ENCODE measurements at regions of chr1 and their contacts with region 1.

Region 1: DNA sequence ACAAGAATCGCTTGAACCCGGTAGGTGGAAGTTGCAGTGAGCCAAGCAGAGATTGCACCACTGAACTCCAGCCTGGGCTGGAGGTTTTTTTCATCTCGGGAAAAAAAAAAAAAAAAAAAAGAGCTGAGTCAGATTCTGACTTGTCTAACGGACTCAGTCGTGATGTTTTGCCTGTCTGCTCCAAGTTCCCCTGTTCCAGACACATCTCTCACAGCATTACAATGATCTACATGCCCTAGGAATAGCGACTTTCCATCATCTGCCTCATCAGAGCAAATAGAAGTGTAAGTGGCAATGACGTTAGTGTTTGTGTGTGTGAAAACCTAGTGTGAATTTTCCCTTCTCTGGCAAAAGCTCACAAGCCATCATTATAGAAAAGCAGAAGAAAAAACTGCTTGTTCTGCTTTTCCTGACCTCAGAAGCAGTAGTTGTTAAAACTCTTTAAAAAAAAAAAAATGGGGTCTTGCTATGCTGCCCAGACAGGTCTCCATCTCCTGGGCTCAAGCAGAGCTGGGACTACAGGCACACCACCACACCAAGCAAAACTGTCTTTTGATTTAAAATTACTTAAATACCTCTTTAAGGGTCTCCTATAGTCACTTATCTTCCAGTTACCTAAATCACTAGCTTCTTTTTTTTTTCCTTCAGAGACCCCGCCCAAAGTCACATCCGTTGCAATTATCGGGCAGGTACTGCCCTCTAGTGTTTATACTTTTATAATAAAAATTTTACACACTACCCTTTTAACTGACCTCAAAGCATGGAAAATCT is 37.3 kb downstream of the PLEKHO1 start:
- DNase-seq: no peak
- H3K4me3 ChIP-seq: no peak overlapping the region
- CTCF ChIP-seq: no peak

Region 2: DNA sequence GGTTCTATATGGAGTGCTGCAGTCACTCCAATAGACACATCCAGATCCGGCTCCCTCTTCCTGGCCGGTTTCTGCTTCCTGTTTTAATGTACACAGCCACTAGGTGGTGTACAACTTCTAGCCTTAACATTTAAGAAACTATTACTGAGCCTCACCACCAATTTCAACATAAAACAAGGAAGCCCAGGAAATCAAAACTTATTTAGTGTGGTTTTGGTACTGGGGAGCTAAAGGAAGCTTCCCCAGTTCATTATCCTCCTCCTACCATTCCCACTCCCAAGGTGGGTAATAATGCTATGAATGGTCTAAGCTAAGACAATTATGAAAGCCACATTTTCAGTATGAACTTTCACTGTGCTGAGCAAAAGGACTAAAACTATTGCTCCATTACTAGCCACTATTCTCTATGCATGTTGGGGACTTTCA is 224.8 kb before region 1 on chr1:
- CTCF ChIA-PET with region 1: interaction called, 22 read pairs
- POLR2A ChIA-PET with region 1: no interaction called
- DNase-seq: peak; percentile 41
- H3K4me3 ChIP-seq: no peak overlapping the region
- CTCF ChIP-seq: peak; percentile 53

Region 3: GRCh38 chr1:150061632-150062101 is 125.3 kb before region 1 on chr1:
- CTCF ChIA-PET with region 1: interaction called, 11 read pairs
- POLR2A ChIA-PET with region 1: no interaction called
- DNase-seq: peak; percentile 82
- H3K4me3 ChIP-seq: no peak overlapping the region
- CTCF ChIP-seq: no peak

Region 4: DNA sequence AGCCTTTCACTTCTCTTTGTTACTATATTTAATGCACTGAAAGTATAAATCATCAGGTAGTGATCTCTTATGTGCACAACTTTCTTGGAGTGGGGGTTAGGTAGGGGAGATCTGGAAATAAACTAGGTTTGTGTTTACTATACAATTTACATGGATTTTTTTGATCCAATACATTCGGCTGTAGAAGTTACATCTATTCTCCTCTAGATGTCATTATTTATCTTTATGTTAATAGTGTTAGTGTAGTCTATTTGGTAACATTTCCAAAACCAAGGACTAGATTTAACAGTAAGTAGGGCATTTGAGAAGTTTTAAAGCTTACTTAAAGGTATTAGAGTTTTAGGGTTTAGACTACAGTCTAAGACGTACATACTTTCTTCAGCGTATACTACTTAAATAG is 114.0 kb before region 1 on chr1:
- CTCF ChIA-PET with region 1: interaction called, 135 read pairs
- POLR2A ChIA-PET with region 1: no interaction called
- DNase-seq: no peak
- H3K4me3 ChIP-seq: no peak overlapping the region
- CTCF ChIP-seq: no peak

Region 5: DNA sequence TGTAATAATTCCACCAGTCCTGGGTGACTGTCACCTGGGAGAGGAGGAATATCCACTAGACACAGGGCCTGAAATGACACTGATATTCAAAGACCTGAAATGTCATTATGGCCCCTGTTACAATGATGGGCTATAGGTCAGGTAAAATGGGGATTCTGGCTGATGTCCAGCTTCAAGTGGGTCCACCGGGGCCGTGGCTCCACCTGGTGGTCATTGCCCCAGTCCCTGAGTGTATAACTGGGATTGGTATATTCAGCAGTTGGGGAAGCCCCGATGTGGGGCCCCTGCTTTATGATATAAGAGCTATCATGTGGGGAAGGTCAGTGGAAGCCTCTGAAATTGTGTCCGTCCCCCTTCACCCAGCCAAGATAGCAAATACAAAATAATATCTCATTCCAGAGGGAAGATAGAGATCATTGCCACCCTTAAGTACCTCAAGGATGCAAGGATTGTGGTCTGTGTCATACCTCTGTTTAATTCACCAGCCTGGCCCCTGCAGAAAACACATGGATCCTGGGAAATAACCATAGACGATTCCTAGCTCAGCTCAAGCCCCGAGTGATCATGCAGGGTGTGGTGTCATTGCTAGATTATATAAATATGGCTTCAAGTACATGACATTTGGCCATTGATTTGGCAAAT is 17.9 kb before region 1 on chr1:
- CTCF ChIA-PET with region 1: interaction called, 52 read pairs
- POLR2A ChIA-PET with region 1: interaction called, 3 read pairs
- DNase-seq: no peak
- H3K4me3 ChIP-seq: no peak overlapping the region
- CTCF ChIP-seq: peak; percentile 85

Region 6: DNA sequence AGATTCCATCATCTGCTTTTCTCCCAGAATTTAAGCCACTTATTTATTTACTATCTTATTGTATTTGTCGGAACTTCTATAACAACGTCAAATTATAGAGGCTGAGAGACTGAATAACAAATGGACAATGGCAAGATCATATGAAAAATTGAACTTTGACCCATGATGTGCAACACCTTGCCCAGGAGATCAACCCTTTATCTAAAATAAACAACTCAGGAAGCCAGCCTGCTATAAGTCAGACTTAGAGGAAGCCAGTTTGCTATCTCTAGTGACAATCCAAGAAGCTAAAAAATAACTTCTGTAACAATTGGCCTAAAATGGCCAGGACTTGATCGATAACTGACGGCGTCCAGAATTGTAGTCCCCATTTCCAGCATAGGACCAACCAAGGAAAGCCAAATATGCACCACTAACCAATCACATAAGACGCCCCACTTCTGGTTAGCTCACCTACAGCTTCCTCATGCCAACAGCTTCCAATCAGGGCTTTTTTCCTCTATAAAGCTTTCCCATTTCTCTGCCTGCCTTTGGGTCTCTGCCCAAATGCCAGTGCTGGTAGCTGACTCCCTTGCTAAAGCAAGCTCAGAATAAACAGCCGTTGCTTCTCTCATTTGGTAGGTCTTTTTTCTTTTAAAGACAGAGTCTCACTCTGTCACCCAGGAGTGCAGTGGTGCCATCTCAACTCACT is 20.5 kb after region 1 on chr1:
- CTCF ChIA-PET with region 1: interaction called, 13 read pairs
- POLR2A ChIA-PET with region 1: no interaction called
- DNase-seq: no peak
- H3K4me3 ChIP-seq: no peak overlapping the region
- CTCF ChIP-seq: no peak